Sigmoid colon (tissue), 7 donors: ENCODE measurements at regions of chr17 and their contacts with region 1.

Region 1: GRCh38 chr17:81636505-81637288 is at the starts of genes NPLOC4 and TSPAN10:
- DNase-seq: peak; percentile 94
- H3K4me3 ChIP-seq: peak within 1 kb of the TSS; percentile 75 to 95 (median 82)
- H3K27ac ChIP-seq: peak within 1 kb of the TSS; percentile 86 to 95 (median 90)
- H3K4me1 ChIP-seq: peaks cover 3 to 34% (median 31%) of the 10 kb centered on the region in 4 donors
- H3K27me3 ChIP-seq: no peaks in the 10 kb centered on the region
- CTCF ChIP-seq: no peak
- EP300 ChIP-seq: no peak
- POLR2A ChIP-seq: no peak
- total RNA-seq, gene NPLOC4: 47.1 to 59.7 (median 52.6) TPM
- total RNA-seq, gene TSPAN10: 0.36 to 1.7 (median 0.67) TPM

Region 2: GRCh38 chr17:81272616-81273015 is 364.1 kb before region 1 on chr17:
- intact Hi-C with region 1: no loop called
- DNase-seq: no peak
- H3K4me3 ChIP-seq: no peak overlapping the region
- H3K27ac ChIP-seq: no peak overlapping the region
- H3K4me1 ChIP-seq: peaks cover 0 to 16% (median 12%) of the 10 kb centered on the region in 4 donors
- H3K27me3 ChIP-seq: no peaks in the 10 kb centered on the region
- CTCF ChIP-seq: no peak
- EP300 ChIP-seq: no peak
- POLR2A ChIP-seq: no peak

Region 3: DNA sequence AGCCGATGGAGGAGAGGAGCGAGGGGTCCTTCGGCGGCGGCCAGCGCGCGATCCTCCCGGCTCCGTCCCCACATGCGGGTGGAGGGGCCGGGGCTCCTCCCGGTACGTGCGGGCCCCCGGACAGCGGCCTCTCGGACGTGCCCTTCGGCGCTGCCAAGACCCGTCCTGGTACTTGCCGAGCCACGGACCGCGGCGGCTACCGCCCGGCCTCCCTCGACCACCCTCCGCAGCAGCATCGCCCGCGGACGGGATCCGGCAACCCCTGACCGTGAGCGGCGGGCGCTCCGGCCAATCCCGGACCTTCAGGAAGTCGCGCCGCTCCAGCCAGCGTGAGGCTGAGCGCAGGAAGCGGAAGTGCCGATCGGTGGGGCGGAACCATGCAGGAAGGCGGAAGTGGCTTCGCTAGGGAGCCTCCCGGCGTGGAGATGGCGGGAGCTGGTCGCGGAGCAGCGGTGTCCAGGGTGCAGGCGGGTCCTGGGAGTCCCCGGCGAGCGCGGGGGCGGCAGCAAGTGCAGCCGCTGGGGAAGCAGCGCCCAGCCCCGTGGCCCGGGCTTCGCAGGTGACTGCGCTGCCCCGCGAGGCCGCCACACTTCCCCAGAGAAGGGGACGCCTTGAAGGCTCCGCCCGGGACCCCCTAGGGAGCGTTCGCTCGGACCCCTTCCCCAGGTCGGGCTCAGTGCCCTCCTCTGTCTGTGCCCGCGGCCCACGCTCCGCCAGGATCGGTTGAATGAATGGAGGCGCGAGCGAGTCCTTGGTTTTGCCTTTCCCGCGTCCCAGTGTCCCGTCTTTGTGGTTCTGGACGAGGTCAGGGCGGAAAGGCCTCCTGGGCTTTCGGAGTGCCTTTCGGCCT is 29.9 kb after region 1 on chr17 and contains the starts of genes CCDC137 and OXLD1:
- intact Hi-C with region 1: loop called (anchors 2 kb)
- DNase-seq: peak; percentile 98
- H3K4me3 ChIP-seq: peak within 1 kb of the TSS; percentile 70 to 95 (median 84)
- H3K27ac ChIP-seq: peak within 1 kb of the TSS; percentile 83 to 96 (median 91)
- H3K4me1 ChIP-seq: peaks cover 0 to 27% (median 26%) of the 10 kb centered on the region in 4 donors
- H3K27me3 ChIP-seq: no peaks in the 10 kb centered on the region
- CTCF ChIP-seq: no peak
- EP300 ChIP-seq: no peak
- POLR2A ChIP-seq: peak; percentile 65 to 85
- total RNA-seq, gene CCDC137: 5.5 to 10.7 (median 9.0) TPM
- total RNA-seq, gene OXLD1: 14.4 to 36.2 (median 26.8) TPM